ENCODE measurements at regions of chr20 and their contacts with region 1.

Region 1: DNA sequence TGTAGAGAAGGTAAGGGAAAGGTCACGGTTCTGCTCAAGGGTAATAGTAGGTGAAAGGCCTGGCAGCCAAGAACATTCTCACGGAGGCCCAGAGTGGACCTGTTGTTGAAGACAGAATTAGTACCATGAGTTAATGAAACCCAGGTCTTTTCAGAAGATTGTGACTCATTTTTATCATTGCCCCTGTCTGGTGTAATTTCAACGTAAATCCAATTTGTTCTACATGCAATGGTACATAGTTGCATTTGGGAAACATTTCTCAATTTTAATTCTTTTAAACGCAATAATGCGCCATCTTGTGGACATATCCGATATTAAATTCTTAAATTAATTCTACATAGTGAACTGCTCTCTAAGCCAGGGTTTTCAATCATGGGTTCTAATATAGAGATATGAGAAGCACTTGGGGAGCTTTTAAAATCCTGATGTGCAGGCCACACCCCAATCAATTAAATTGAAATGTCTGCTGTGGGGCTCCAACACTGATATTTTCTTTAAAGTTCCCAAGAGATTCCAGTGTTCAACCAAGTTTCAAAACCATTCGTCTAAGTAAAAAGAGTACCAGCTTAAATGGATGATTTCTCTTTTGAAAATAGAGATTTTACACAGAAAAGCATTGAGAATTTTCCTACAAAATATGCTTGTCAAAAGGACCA is 257.4 kb downstream of the PLCB1 start:
- DNase-seq: no peak
- ATAC-seq: peak; percentile 40 to 57
- H3K4me3 ChIP-seq: no peak overlapping the region
- H3K27ac ChIP-seq: no peak overlapping the region
- H3K4me1 ChIP-seq: no peaks in the 10 kb centered on the region
- H3K27me3 ChIP-seq: no peaks in the 10 kb centered on the region
- CTCF ChIP-seq: peak; percentile 52

Region 2: DNA sequence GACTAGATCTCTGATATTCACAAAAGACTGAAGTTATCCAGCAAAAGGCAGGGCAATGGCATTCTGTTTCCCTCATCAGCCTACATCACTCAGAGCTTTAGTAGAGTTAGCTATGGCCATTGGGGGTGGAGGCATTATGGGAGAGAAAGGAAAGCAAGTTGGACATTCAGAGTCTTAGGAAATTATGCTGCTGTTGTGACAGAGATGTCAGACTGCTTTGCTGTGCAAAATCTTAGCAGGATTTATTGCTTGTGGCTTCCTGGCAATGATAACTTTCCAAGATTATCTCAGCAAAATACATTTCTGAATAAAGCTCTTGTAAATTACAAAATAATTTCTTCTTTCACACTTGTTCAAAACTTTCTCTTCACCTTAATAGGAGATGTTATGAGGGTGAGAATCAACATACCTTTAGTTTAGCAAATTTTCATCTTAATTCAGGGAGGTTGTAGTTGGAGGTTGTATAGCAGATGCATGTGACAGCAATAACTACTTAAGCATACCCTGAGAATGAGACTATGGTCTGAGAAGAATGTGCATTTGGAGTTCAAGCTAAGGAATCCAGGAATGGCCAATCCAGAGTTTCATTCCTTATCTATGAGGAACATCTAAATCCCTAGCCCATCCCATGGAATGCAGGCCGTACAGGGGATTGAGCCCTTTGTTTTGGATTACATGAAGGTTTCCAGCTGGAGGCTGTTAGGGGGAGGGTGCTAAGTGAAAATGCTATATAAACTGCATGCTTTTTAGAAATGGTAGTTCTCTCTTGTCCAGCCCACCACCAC is 629.1 kb before region 1 on chr20:
- intact Hi-C with region 1: no loop called
- DNase-seq: no peak
- ATAC-seq: no peak
- H3K4me3 ChIP-seq: no peak overlapping the region
- H3K27ac ChIP-seq: no peak overlapping the region
- H3K4me1 ChIP-seq: no peaks in the 10 kb centered on the region
- H3K27me3 ChIP-seq: no peaks in the 10 kb centered on the region
- CTCF ChIP-seq: no peak

Region 3: DNA sequence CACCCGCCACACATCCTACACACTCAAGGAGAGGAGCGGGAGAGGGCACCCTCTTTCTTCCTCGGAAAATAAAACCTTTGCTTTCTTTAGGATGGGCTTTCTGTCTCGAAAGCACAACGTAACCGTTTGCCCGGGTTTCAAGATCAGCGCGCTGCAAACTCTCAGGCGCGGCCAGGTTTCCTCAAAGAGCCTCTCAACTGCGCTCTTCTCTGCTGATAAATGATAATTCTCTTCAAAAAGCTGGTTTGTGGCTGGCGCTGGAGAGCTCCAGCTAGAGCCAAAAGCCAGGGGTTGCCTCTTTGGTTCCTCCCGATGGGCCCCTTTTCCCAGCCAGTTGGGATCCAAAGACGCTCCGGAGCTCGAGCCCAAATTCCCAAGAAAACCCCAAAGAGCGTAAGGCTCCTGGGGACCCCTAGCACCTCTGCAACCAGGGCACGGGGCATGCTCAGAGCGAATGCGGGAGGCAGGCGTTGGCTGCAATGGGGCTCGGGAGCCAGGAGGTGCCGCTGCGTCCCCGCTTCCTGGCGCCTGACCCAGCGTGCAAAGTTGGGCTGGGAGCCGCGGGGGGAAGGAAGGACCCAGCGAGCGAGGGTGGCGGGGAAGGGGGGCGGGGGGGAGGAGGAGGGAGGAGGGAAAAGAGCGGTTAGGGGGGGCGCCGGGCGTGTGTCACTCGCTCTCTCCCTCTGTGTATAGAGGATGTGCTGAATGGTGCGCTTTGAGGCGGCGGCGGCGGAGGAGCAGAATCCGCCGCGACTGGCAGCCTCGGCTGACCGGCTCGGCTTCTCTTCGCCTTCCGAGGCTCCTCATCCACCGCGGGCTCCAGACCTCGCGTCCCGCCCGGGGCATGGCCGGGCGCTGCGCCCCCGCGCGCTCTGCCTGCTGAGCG is 257.7 kb before region 1 on chr20 and contains the start of gene PLCB1:
- intact Hi-C with region 1: loop called (anchors 10 kb)
- DNase-seq: peak; percentile 85
- ATAC-seq: peak; percentile 93 to 96
- H3K4me3 ChIP-seq: peak within 1 kb of the TSS; percentile 65
- H3K27ac ChIP-seq: peak within 1 kb of the TSS; percentile 72
- H3K4me1 ChIP-seq: peaks cover 20% of the 10 kb centered on the region
- H3K27me3 ChIP-seq: peaks cover 11% of the 10 kb centered on the region
- CTCF ChIP-seq: peak; percentile 84
- total RNA-seq, gene PLCB1: 6.3 TPM